PC-3 (cell line): ENCODE measurements at regions of chr17 and their contacts with region 1.

Region 1: GRCh38 chr17:51120739-51121617 is at the start of gene SPAG9:
- DNase-seq: peak; percentile 99
- ATAC-seq: peak; percentile 71
- H3K4me3 ChIP-seq: peak within 1 kb of the TSS; percentile 98
- H3K27ac ChIP-seq: peak within 1 kb of the TSS; percentile 98
- H3K4me1 ChIP-seq: peaks cover 35% of the 10 kb centered on the region
- H3K27me3 ChIP-seq: no peaks in the 10 kb centered on the region
- CTCF ChIP-seq: no peak
- total RNA-seq, gene SPAG9: 90.5 and 98.1 TPM in 2 replicates

Region 2: DNA sequence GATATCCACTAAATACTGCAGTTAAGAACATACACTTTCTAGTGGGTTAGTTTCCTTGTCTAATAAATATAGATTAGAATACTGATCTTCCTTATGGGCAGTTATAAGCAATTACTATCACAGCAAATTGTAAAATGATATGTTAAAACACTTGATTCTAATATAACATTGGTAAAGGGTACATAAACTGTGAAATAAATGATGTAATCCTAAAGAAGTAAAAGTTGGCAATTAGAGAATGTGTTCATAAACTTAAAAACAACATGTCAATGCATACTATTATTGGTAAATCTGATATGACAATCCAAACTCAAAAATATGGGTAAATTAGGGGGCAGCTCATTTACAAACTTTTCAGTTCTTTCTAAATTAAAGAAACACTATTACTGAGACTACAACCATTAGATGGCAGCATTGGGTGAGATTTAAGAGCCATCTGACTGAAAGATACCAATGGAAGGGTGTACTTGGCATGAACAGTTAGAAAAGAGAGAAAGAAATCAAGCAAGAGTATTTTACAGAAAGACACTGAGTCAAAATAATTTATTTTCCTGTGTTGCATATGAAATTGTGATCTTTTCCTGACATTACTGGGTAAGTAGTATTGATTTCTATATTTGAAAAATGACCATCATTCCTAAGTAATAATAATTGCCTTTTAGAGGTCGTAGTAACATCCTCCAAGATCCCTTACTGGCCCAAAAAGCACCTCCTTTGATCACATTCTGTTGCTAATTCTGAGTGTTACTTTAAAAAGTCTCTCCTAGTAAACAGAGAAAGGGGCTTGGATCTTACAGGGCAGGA is 119.9 kb before region 1 on chr17:
- CTCF ChIA-PET with region 1: no interaction called
- POLR2A ChIA-PET with region 1: interaction called, 3 read pairs
- intact Hi-C with region 1: loop called (anchors 1 kb)
- DNase-seq: peak; percentile 86
- ATAC-seq: peak; percentile 80
- H3K4me3 ChIP-seq: no peak overlapping the region
- H3K27ac ChIP-seq: no peak overlapping the region
- H3K4me1 ChIP-seq: no peaks in the 10 kb centered on the region
- H3K27me3 ChIP-seq: no peaks in the 10 kb centered on the region
- CTCF ChIP-seq: peak; percentile 90

Region 3: GRCh38 chr17:51079049-51079448 is 41.9 kb before region 1 on chr17:
- CTCF ChIA-PET with region 1: interaction called, 14 read pairs
- POLR2A ChIA-PET with region 1: interaction called, 6 read pairs
- intact Hi-C with region 1: no loop called
- DNase-seq: peak; percentile 64
- ATAC-seq: peak; percentile 67
- H3K4me3 ChIP-seq: no peak overlapping the region
- H3K27ac ChIP-seq: no peak overlapping the region
- H3K4me1 ChIP-seq: peaks cover 14% of the 10 kb centered on the region
- H3K27me3 ChIP-seq: no peaks in the 10 kb centered on the region
- CTCF ChIP-seq: no peak

Region 4: DNA sequence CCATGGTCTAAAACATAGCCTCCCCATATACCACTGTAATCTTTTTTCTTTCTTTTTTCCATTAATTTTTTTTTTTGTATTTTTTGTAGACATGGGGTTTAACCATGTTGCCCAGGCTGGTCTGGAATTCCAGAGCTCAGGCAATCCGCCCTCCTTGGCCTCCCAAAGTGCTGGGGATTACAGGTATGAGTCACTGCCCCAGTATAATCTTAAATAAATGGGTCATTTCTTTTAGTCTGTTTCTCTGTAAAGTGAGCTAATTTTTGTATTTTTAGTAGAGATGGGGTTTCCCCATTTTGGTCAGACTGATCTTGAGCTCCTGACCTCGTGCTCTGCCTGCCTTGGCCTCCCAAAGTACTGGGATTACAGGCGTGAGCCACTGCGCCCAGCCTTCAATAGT is 26.7 kb after region 1 on chr17:
- CTCF ChIA-PET with region 1: interaction called, 29 read pairs
- POLR2A ChIA-PET with region 1: interaction called, 23 read pairs
- intact Hi-C with region 1: no loop called
- DNase-seq: peak; percentile 28
- ATAC-seq: peak; percentile 57
- H3K4me3 ChIP-seq: no peak overlapping the region
- H3K27ac ChIP-seq: no peak overlapping the region
- H3K4me1 ChIP-seq: peaks cover 17% of the 10 kb centered on the region
- H3K27me3 ChIP-seq: no peaks in the 10 kb centered on the region
- CTCF ChIP-seq: no peak

Region 5: GRCh38 chr17:51166197-51166986 is 45.4 kb after region 1 on chr17 and contains the start of gene NME2:
- CTCF ChIA-PET with region 1: no interaction called
- POLR2A ChIA-PET with region 1: no interaction called
- intact Hi-C with region 1: loop called (anchors 1 kb)
- DNase-seq: peak; percentile 97
- ATAC-seq: peak; percentile 91
- H3K4me3 ChIP-seq: peak within 1 kb of the TSS; percentile 81
- H3K27ac ChIP-seq: peak within 1 kb of the TSS; percentile 73
- H3K4me1 ChIP-seq: peaks cover 21% of the 10 kb centered on the region
- H3K27me3 ChIP-seq: no peaks in the 10 kb centered on the region
- CTCF ChIP-seq: no peak
- total RNA-seq, gene NME2: 1,420 and 1,558 TPM in 2 replicates

Region 6: GRCh38 chr17:51461578-51462004 is 340.6 kb after region 1 on chr17:
- CTCF ChIA-PET with region 1: no interaction called
- POLR2A ChIA-PET with region 1: no interaction called
- intact Hi-C with region 1: no loop called
- DNase-seq: peak; percentile 82
- ATAC-seq: peak; percentile 85
- H3K4me3 ChIP-seq: no peak overlapping the region
- H3K27ac ChIP-seq: no peak overlapping the region
- H3K4me1 ChIP-seq: no peaks in the 10 kb centered on the region
- H3K27me3 ChIP-seq: peaks cover 46% of the 10 kb centered on the region; the same call in 1 of the 2 replicates
- CTCF ChIP-seq: peak; percentile 96